A549 (cell line): ENCODE measurements at regions of chr11 and their contacts with region 1.

Region 1: DNA sequence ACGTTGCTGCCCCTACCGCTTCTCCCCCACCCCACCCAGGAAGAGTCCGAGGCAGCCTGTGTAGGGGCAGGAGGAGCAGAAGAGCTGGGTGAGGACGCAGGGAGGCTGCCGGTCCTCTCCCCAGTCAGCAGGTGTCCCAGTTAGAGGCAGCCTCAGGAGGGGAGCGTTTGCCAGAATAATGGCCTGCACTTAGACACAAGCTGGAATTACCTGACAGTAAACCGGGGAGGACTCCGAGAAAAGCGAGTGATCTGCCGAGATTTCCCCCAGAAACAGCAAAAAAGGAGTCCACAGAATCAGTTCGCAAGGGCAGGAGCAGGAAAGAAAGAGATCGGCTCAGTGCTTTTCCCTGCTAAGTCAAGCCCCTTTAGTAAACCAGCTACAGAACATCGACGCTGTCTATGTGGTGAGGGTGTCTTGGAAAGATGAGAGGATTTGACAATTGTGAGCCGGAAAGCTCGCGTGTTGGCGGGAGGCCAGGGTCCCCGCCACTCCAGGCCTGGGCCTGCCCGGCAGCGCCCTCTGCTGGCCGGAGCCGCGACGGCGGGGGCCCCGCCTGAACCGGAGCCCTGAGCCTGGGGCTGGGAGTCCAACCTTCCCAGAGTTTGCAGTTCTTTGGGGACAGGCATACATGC is 17.7 kb upstream of the THRSP start:
- DNase-seq: peak; percentile 50 to 81
- ATAC-seq: peak; percentile 95 to 97
- H3K4me3 ChIP-seq: peak overlapping the region; percentile 39
- H3K27ac ChIP-seq: peak overlapping the region; percentile 47 to 78
- H3K4me1 ChIP-seq: peaks cover 10% of the 10 kb centered on the region
- CTCF ChIP-seq: peak; percentile 99
- EP300 ChIP-seq: no peak
- POLR2A ChIP-seq: no peak
- RAD21 ChIP-seq: peak; percentile 81 to 95

Region 2: DNA sequence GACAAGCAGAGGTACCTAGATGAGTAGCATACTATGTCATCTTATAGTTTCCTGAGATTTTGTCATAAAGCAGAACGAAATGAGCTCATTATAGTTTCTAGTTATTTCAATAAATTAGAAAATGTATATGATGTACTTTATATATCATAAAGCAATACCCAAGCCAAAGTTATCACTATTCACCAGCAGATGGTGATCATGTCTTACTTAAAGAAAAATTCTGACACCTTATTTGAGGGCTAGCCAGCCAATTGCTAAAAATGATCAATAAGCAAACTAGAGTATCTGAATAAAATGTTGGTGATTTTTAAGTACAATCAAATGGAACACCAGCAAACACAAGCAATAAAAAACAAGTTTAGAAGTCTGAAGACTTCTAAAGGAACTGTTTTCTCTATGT is 269.5 kb before region 1 on chr11:
- CTCF ChIA-PET with region 1: interaction called, 10 read pairs
- POLR2A ChIA-PET with region 1: no interaction called
- DNase-seq: peak in 1 of 2 experiments; percentile 21
- ATAC-seq: peak in 1 of 2 experiments; percentile 57; a peak in 1 of 6 replicates
- H3K4me3 ChIP-seq: no peak overlapping the region
- H3K27ac ChIP-seq: no peak overlapping the region
- H3K4me1 ChIP-seq: no peaks in the 10 kb centered on the region
- CTCF ChIP-seq: peak; percentile 60
- EP300 ChIP-seq: no peak
- POLR2A ChIP-seq: no peak
- RAD21 ChIP-seq: peak; percentile 65 to 70

Region 3: GRCh38 chr11:77994412-77995362 is 51.3 kb before region 1 on chr11 and contains the start of gene INTS4:
- CTCF ChIA-PET with region 1: interaction called, 47 read pairs
- POLR2A ChIA-PET with region 1: interaction called, 12 read pairs
- DNase-seq: peak; percentile 95 to 100
- ATAC-seq: peak; percentile 99
- H3K4me3 ChIP-seq: peak within 1 kb of the TSS; percentile 71
- H3K27ac ChIP-seq: peak within 1 kb of the TSS; percentile 82 to 87
- H3K4me1 ChIP-seq: peaks cover 13% of the 10 kb centered on the region
- CTCF ChIP-seq: no peak
- EP300 ChIP-seq: no peak
- POLR2A ChIP-seq: peak; percentile 75
- RAD21 ChIP-seq: no peak; a peak in 1 of 5 replicates
- polyA plus RNA-seq, gene INTS4: 35.3 and 39.4 TPM in 2 replicates

Region 4: DNA sequence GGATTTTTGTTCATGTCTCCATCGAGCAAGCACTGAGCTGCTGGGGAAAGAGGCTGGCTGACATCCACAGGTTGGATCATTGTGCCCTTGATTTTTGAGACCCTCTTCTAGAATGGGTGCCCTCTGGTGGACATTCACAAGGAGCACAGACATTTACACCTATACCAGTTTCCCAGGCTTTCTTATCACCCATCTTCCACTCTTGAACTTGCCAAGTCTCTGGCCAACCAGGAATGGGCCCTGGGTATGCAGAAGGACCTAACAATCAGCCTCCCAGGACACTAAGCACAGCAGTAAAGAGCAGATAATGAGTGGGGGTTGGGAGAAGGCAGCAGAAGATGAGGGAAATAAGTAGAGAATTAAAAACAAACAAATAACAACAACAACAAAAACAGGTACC is 45.8 kb before region 1 on chr11:
- CTCF ChIA-PET with region 1: interaction called, 47 read pairs
- POLR2A ChIA-PET with region 1: interaction called, 12 read pairs
- DNase-seq: peak; percentile 43 to 72
- ATAC-seq: peak; percentile 95
- H3K4me3 ChIP-seq: no peak overlapping the region
- H3K27ac ChIP-seq: no peak overlapping the region
- H3K4me1 ChIP-seq: 0 out of 3 replicates have a peak, but pooled peaks cover 3% of the 10 kb centered on the region
- CTCF ChIP-seq: peak; percentile 78
- EP300 ChIP-seq: no peak
- POLR2A ChIP-seq: no peak
- RAD21 ChIP-seq: peak; percentile 56 to 59

Region 5: DNA sequence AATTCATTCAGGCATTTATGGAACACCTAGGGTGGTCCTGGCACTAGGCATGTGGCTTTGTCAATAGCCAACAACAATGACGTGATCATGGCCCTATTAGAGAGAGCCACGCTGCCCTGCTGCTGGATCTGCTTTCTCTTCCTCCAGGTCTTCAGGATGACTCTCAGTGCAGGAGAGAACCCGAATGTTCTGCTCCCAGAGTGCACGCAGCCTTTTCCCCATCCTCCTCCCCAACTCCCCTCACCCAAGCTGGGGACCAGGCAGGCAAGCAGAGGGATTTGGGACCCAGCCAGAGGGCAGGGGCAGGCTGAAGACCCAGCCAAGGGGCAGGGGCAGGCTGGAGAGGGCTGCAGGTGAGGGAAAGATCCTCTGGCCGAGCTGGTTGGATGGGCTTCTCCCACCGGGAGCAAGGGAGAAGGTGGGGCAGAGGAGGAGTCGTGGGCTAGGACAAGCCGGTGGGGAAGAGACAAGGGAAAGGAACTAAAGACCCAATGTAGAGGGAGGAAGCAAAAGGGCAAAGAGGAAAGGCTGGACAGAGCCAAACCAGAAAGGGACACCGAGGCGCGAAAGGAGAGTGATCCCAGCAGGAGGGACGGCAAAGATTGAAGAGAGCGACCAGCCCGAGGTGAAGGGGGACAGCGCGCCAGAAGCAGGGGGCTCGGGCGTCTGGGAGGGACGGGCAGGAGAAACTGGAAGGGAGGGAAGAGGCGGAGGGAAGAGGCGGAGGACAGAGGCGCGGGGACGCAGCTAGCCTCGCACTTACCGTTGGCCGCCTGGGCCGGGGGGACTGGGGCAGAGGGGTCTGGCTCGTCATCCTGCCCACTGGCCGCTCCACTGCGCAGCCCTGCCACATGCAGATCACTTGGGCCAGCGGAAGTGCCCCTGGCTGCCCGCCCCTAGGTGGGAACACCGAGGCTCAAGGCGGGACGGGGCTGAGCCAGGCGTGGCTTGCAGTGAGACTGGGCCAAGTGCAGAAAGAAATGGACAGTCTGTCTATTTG is 23.3 kb before region 1 on chr11 and contains the start of gene KCTD14:
- CTCF ChIA-PET with region 1: interaction called, 21 read pairs
- POLR2A ChIA-PET with region 1: no interaction called
- DNase-seq: no peak
- ATAC-seq: peak; percentile 67 to 82
- H3K4me3 ChIP-seq: peak within 1 kb of the TSS; percentile 37
- H3K27ac ChIP-seq: peak within 1 kb of the TSS; percentile 29 to 75; a peak in 4 of 6 replicates
- H3K4me1 ChIP-seq: peaks cover 10% of the 10 kb centered on the region
- CTCF ChIP-seq: no peak
- EP300 ChIP-seq: no peak
- POLR2A ChIP-seq: no peak
- RAD21 ChIP-seq: no peak
- polyA plus RNA-seq, gene KCTD14: 3.2 and 3.6 TPM in 2 replicates

Region 6: GRCh38 chr11:78030429-78031325 is 15.3 kb before region 1 on chr11:
- CTCF ChIA-PET with region 1: interaction called, 59 read pairs
- POLR2A ChIA-PET with region 1: no interaction called
- DNase-seq: peak in 1 of 2 experiments; percentile 45
- ATAC-seq: peak; percentile 58 to 74; a peak in 5 of 6 replicates
- H3K4me3 ChIP-seq: no peak overlapping the region
- H3K27ac ChIP-seq: peak overlapping the region in 1 of 2 experiments; percentile 69; a peak in 3 of 6 replicates
- H3K4me1 ChIP-seq: peaks cover 34% of the 10 kb centered on the region
- CTCF ChIP-seq: no peak
- EP300 ChIP-seq: no peak
- POLR2A ChIP-seq: no peak
- RAD21 ChIP-seq: no peak

Region 7: GRCh38 chr11:78061088-78061921 is 15.3 kb after region 1 on chr11:
- CTCF ChIA-PET with region 1: interaction called, 21 read pairs
- POLR2A ChIA-PET with region 1: no interaction called
- DNase-seq: no peak
- ATAC-seq: peak; percentile 34 to 40; a peak in 3 of 6 replicates
- H3K4me3 ChIP-seq: no peak overlapping the region
- H3K27ac ChIP-seq: no peak overlapping the region
- H3K4me1 ChIP-seq: no peaks in the 10 kb centered on the region
- CTCF ChIP-seq: no peak
- EP300 ChIP-seq: no peak
- POLR2A ChIP-seq: no peak
- RAD21 ChIP-seq: no peak

Region 8: GRCh38 chr11:78112582-78113275 is 66.8 kb after region 1 on chr11:
- CTCF ChIA-PET with region 1: no interaction called
- POLR2A ChIA-PET with region 1: no interaction called
- DNase-seq: no peak
- ATAC-seq: no peak
- H3K4me3 ChIP-seq: no peak overlapping the region
- H3K27ac ChIP-seq: no peak overlapping the region
- H3K4me1 ChIP-seq: no peaks in the 10 kb centered on the region
- CTCF ChIP-seq: no peak
- EP300 ChIP-seq: no peak
- POLR2A ChIP-seq: no peak
- RAD21 ChIP-seq: no peak

Region 9: GRCh38 chr11:78131956-78132355 is 86.0 kb after region 1 on chr11:
- CTCF ChIA-PET with region 1: no interaction called
- POLR2A ChIA-PET with region 1: no interaction called
- DNase-seq: no peak
- ATAC-seq: 0 out of 6 replicates have a peak, but pooled peaks of 1 of the 2 experiments have one; percentile 35
- H3K4me3 ChIP-seq: no peak overlapping the region
- H3K27ac ChIP-seq: no peak overlapping the region
- H3K4me1 ChIP-seq: no peaks in the 10 kb centered on the region
- CTCF ChIP-seq: no peak
- EP300 ChIP-seq: no peak
- POLR2A ChIP-seq: no peak
- RAD21 ChIP-seq: no peak